Right ventricle myocardium inferior (tissue), 1 donor: ENCODE measurements at regions of chr11 and their contacts with region 1.

Region 1: DNA sequence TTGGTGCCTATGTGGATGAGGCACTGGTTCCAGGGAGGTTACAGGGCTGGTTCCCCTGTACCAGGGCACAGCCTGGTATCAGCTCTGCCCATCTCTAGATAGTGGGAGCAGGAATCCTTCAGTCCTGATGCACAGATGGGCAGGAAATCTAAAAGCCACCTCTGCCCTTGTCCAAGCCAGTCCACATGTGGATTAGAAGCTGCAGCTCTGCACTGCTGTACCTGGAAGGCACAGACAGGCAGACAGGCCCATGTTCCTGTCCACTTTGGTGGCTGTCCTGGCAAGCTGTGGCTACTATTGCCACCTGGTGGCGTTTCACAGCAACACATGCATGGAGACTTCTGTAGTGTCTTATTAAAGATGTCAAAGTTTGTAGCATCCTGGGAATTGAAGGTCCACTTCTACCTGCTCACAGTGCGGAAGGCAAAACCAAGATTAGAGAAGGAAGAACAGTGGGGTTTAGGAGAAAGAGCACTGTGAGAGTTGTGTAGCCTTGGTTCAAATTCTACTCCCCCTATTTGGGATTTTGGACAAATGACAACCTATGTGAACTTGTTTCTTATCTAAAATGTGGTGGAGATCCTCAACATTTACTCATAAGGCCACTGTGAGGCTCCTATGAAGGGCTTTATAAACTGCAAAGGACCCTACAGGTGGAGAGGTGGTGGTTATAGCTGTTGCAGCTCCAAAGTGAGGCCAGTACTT is 30.1 kb downstream of the NAV2 start:
- DNase-seq: peak; percentile 76
- ATAC-seq: peak; percentile 87

Region 2: DNA sequence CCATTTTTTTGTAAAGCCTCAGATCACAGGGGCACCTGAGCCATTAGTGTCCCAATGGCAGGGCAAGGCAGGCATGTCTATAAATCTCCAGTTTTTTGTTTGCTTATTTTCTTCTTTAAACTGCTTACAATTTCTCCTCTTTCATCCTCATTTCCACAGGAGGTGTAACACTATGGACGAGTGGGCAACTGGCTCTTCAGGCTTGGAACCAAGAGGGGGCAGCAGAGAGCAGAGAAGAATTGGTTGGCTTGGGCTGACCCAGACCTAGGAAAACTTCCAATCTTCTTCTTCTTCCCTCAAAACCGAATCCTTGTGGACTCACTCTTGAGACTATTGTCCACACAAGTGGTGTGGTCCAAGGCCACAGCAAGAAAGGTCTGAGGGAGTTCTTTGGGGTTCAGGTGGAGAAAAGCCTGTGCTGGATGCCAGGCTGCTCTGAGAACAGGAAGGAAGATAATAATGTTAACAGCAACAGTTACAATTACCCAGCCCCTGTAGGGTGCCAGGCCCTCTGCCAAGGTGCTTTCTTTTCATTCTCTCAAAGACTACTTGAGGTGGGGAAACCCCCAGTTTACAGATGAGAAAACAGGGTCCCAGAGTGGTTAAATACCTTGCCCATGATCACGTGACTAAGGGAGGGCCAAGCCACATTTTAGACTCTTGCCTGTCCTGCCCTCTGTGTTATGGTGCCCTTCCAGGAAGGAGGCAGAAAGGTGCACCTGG is 431.3 kb before region 1 on chr11:
- intact Hi-C with region 1: loop called (anchors 10 kb)
- DNase-seq: peak; percentile 60
- ATAC-seq: peak; percentile 79

Region 3: GRCh38 chr11:19800162-19800561 is 57.4 kb after region 1 on chr11:
- intact Hi-C with region 1: no loop called
- DNase-seq: no peak
- ATAC-seq: no peak

Region 4: GRCh38 chr11:19903620-19904069 is 160.9 kb after region 1 on chr11:
- intact Hi-C with region 1: loop called (anchors 2 kb)
- DNase-seq: no peak
- ATAC-seq: no peak